AG04449 (cell line): ENCODE measurements at regions of chr2 and their contacts with region 1.

Region 1: GRCh38 chr2:43484323-43484930 is 111.4 kb downstream of the THADA start:
- DNase-seq: peak; percentile 37
- H3K4me3 ChIP-seq: no peak overlapping the region
- CTCF ChIP-seq: peak; percentile 40

Region 2: GRCh38 chr2:42859006-42859552 is 625.3 kb before region 1 on chr2:
- CTCF ChIA-PET with region 1: interaction called, 57 read pairs
- POLR2A ChIA-PET with region 1: no interaction called
- DNase-seq: peak; percentile 24
- H3K4me3 ChIP-seq: no peak overlapping the region
- CTCF ChIP-seq: peak; percentile 72

Region 3: GRCh38 chr2:42974721-42975717 is 509.4 kb before region 1 on chr2:
- CTCF ChIA-PET with region 1: interaction called, 44 read pairs
- POLR2A ChIA-PET with region 1: no interaction called
- DNase-seq: no peak
- H3K4me3 ChIP-seq: peak overlapping the region; percentile 48
- CTCF ChIP-seq: peak; percentile 99

Region 4: GRCh38 chr2:43318791-43319190 is 165.6 kb before region 1 on chr2:
- CTCF ChIA-PET with region 1: interaction called, 12 read pairs
- POLR2A ChIA-PET with region 1: no interaction called
- DNase-seq: no peak
- H3K4me3 ChIP-seq: no peak overlapping the region
- CTCF ChIP-seq: no peak

Region 5: GRCh38 chr2:43472527-43473194 is 11.8 kb before region 1 on chr2:
- CTCF ChIA-PET with region 1: interaction called, 40 read pairs
- POLR2A ChIA-PET with region 1: no interaction called
- DNase-seq: no peak
- H3K4me3 ChIP-seq: no peak overlapping the region
- CTCF ChIP-seq: no peak

Region 6: DNA sequence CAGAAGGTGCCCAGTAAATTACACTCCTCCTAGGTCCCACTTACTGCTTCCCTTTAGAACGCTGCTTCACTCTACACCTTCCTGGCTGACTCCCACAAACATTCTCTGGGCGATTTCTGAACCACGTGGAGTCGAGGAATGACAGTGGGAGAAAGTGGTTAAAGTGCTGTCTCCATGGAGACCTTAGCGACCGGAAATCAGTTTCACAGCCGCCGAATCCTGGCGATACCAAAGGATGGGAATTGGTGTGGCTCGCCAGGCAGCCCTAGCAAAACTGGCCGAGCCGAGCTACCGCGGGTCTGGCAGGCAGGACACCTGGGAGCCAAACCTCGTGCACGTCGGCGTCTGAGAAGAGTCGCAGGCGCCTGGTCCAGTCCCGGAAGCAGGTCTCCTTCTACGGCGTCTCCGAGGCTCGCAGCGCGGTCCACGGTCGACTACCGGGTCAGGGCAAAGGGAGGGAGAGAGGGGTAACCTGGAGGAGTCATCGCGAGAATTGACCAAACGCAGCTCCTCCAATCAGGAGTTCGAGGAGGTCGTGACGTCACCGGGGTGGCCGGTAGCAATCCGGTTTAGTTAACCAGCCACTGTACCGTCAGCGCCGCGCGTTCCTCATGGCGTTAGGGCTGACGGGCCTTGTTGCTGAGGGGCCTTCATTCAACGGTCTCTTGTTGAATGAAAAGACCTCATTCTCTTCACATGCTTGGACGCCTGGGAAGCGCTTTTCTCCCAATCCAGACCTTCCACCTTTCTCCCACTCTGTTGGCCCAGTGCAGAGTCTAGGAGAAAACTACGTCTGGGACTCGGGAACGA is 111.4 kb after region 1 on chr2 and contains the start of gene THADA:
- CTCF ChIA-PET with region 1: no interaction called
- POLR2A ChIA-PET with region 1: no interaction called
- DNase-seq: peak; percentile 92
- H3K4me3 ChIP-seq: peak within 1 kb of the TSS; percentile 94
- CTCF ChIP-seq: no peak